ENCODE measurements at regions of chr16 and their contacts with region 1.

Region 1: DNA sequence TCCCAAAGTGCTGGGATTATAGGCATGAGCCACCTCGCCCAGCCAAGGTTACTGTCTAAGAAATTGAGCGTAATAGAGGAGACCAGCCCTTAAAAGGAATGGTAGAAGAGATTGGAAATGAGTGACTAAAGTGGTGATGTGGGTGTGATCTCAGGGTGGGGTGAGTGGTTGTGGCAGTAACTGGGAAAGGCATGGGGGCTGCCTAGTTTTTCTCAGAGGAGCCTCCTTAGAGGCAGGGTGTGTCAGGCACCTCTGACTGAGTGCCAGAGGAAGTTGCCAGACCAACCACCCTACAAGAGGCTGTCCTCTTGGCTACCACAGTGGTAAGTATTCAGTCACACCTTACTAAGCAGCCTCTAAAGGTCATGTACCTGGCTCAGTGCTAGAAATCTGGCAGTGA is 8.9 kb downstream of the DUS2 start:
- DNase-seq: peak; percentile 76 to 80
- H3K4me3 ChIP-seq: no peak overlapping the region
- H3K27ac ChIP-seq: peak overlapping the region; percentile 59
- H3K4me1 ChIP-seq: peaks cover 15% of the 10 kb centered on the region
- H3K27me3 ChIP-seq: no peaks in the 10 kb centered on the region
- CTCF ChIP-seq: no peak

Region 2: GRCh38 chr16:67993189-67994039 is 38.5 kb before region 1 on chr16:
- CTCF ChIA-PET with region 1: interaction called, 3 read pairs
- POLR2A ChIA-PET with region 1: no interaction called
- intact Hi-C with region 1: loop called (anchors 2 kb)
- DNase-seq: peak in 1 of 2 experiments; percentile 75
- H3K4me3 ChIP-seq: no peak overlapping the region
- H3K27ac ChIP-seq: no peak overlapping the region
- H3K4me1 ChIP-seq: no peaks in the 10 kb centered on the region
- H3K27me3 ChIP-seq: no peaks in the 10 kb centered on the region
- CTCF ChIP-seq: peak; percentile 94

Region 3: DNA sequence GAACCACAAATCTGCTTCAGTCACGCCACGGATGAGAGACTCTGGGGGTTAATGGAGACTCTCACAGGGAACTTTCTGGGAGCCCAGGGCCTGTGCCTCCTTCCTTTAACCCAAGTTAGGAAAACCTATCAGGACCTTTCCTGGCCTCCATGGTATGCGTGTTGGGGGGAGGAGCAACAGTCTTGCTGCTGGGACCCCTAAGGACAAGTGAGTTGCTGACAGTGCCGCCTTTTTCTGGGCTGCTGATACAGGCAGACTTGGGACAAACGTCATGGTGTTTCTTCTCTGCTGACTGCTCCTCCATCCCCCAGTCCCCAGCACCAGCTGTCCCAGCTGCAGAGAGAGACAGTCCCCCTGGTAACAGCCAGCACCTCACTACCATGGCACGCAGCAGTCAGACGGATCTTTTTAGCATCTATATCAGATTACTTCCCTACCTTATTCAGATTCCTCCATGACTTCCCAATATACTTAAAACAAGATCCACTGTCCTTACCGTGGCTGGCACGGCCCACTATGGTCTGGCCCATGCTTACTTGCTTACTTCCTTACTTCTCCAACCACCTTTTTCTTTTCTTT is 22.7 kb before region 1 on chr16:
- CTCF ChIA-PET with region 1: no interaction called
- POLR2A ChIA-PET with region 1: no interaction called
- intact Hi-C with region 1: no loop called
- DNase-seq: no peak
- H3K4me3 ChIP-seq: no peak overlapping the region
- H3K27ac ChIP-seq: no peak overlapping the region
- H3K4me1 ChIP-seq: peaks cover 20% of the 10 kb centered on the region
- H3K27me3 ChIP-seq: no peaks in the 10 kb centered on the region
- CTCF ChIP-seq: no peak

Region 4: DNA sequence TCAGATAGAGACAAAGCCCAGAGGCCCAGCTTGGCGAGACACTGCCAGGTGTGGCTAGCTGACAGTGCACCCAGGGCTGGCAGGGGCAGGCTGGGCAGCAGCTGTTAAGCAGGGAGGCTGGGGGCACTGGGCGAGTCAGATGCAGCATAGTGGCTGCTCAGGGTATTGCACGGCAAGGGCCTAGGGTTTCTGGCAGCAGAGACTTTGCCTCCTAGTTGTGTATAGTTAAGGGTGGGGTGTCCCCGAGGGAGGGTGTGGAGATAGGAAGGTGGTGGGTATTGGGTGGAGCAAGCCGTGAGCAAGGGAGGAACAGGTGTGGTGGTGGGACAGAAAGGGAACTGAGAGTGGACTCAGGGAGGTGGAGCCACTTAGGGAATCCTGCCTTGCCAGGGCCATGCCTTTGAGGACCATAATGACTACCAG is 350.4 kb after region 1 on chr16:
- CTCF ChIA-PET with region 1: no interaction called
- POLR2A ChIA-PET with region 1: no interaction called
- intact Hi-C with region 1: no loop called
- DNase-seq: no peak
- H3K4me3 ChIP-seq: no peak overlapping the region
- H3K27ac ChIP-seq: no peak overlapping the region
- H3K4me1 ChIP-seq: peaks cover 7% of the 10 kb centered on the region; the same call in 1 of the 2 replicates
- H3K27me3 ChIP-seq: no peaks in the 10 kb centered on the region
- CTCF ChIP-seq: peak; percentile 57; the same call in 1 of the 2 replicates

Region 5: DNA sequence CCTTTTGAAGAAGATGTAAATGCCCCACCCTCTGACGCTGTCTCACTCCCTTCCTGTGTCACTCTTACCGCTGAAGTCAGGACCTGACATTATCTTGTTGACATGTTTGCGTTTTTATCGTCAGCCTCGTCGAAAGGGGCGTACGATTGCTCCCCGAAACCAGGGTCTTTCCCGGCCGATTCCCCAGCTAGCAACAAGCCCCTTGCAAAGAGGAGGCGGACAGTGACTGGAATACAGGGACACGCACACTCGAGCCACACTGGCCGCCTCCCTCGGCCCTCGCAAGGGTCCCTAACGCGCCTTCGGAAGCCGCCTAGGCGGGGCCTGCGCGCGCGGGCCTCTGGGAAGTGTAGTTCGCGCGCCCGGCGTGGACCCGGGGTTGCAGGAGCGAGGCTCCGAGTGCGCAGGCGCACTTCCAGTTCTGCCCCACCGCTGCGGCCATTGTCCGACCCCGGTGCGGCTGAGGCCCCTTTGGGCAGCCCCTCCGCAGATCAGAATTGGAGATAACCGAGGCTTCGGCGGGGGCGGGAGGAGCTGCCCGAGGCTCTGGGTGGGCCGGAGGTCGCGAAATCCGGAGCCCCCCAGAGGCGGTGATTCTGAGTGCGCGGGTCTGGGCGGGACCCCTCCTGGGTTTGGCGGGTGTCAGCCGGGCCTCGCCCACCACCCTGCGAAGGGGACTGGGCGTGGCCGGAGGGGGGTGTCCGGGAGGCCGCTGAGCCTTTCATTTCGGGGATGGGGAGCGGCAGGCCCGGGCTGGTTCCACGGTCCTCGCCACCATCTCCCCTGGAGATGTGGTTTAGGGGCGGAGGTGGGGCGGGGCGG is 507.1 kb after region 1 on chr16 and contains the start of gene ZFP90:
- CTCF ChIA-PET with region 1: interaction called, 11 read pairs
- POLR2A ChIA-PET with region 1: no interaction called
- intact Hi-C with region 1: no loop called
- DNase-seq: peak; percentile 46 to 76
- H3K4me3 ChIP-seq: peak within 1 kb of the TSS; percentile 79
- H3K27ac ChIP-seq: no peak within 1 kb of the TSS
- H3K4me1 ChIP-seq: no peaks in the 10 kb centered on the region
- H3K27me3 ChIP-seq: no peaks in the 10 kb centered on the region
- CTCF ChIP-seq: no peak
- total RNA-seq, gene ZFP90: 14.5 and 20.5 TPM in 2 replicates